AG04450 (cell line): ENCODE measurements at regions of chr3 and their contacts with region 1.

Region 1: DNA sequence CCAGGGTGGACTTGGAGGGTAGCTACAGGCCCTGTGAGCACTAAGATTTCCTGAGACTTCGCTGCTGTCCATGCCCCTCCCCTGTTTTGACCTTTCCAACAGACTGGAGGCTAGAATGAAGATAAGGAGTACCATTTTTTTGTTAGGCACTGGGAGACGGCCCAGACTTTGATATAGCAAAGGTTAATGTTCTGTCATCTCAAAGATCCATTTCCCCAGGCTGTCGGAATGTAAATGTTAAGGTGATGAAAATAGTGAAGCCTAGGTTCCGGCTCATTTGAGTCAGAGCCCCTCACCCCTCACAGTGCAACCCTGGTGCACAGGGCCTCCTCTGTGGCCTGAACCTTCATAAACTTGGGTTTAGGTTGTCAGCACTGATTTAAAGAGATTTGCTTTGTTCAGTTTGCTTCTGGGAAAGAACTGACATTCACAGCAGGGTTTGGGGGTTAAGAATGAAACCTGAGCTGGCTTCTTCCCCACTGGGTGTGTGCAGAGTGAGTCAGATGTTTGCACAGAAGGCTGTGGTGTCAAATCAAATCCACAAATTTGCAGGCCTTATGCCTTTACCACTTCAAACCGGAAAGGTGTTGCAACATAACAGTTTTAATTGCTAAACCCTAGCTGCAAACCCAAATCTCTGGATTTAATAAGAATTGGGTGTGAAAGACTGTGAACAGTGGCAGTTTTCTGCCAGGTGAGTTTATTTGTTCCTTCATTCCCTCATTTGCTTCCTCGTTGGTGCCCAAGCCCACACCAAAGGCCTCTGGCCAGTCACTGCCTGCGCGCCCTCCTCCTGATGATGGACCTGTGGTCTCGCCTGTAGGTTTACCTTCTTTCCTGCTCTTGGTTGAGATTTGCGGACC is 20.6 kb upstream of the KCTD6 start:
- DNase-seq: peak; percentile 33
- H3K4me3 ChIP-seq: no peak overlapping the region
- H3K27ac ChIP-seq: peak overlapping the region; percentile 75
- H3K27me3 ChIP-seq: no peaks in the 10 kb centered on the region
- CTCF ChIP-seq: no peak

Region 2: DNA sequence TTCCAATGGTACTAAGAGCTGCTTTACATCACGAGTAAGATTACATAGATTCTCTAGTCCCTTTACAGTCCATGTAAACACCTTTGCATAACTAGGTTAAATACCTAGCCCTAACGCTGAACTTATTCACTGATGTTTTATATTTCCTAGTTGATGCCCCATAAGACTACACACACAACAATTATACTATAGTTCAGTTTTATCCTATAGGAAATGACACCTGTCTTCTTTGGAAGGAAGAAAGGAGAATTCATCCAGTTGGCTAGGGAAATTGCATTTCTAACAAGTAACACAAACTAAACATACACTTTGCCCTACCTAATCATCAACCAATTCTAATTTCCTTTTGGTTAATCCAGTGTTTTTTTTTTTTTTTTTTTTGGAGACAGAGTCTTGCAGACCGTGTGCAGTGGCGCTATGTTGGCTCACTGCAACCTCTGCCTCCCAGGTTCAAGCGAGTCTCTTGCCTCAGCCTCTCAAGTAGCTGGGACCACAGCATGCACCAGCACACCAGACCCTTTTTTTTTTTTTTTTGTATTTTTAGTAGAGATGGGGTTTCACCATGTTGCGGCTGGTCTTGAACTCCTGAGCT is 901.3 kb before region 1 on chr3:
- CTCF ChIA-PET with region 1: interaction called, 10 read pairs
- POLR2A ChIA-PET with region 1: no interaction called
- DNase-seq: no peak
- H3K4me3 ChIP-seq: no peak overlapping the region
- H3K27ac ChIP-seq: no peak overlapping the region
- H3K27me3 ChIP-seq: no peaks in the 10 kb centered on the region
- CTCF ChIP-seq: no peak

Region 3: DNA sequence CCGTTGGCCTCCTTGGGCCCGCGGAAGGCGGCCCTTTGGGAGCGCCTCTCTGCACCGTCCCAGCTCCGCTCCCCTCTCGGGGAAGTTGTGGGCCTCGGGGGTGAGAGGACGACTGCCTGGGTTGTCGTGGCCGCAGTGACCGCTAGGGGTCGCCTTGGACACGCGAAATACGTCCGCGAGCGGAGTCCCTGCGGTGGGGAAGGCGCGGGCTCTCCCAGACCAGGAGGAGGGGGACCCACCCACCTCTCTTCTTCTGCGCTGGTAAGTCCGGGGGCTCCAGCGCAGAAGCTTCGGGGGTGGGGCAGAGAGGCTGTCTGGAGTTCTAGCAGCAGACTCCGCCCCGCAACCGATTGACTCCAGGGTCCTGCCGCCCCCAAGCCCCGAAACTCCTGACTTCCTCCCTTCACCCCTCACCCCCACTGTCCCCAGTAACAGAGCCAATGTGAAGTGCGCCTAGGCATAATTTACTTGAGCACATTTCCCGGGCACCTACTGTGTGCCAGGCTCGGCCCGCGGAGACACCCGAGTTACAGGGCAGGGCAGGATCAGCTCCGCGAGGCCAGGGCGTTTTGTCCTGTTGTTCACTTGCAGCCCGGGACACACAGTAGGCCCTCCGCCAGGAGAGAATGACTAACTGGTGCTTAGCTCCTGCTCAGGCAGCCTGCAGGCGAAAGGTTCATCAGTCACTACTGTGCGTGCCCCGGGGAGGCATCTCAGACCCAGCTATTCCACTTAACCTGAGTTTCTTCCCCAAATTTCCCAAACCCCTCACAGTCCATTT is 293.3 kb before region 1 on chr3:
- CTCF ChIA-PET with region 1: no interaction called
- POLR2A ChIA-PET with region 1: no interaction called
- DNase-seq: peak; percentile 48
- H3K4me3 ChIP-seq: peak overlapping the region; percentile 49
- H3K27ac ChIP-seq: no peak overlapping the region
- H3K27me3 ChIP-seq: no peaks in the 10 kb centered on the region
- CTCF ChIP-seq: peak; percentile 89

Region 4: GRCh38 chr3:58452176-58452575 is 19.1 kb before region 1 on chr3:
- CTCF ChIA-PET with region 1: no interaction called
- POLR2A ChIA-PET with region 1: no interaction called
- DNase-seq: no peak
- H3K4me3 ChIP-seq: no peak overlapping the region
- H3K27ac ChIP-seq: no peak overlapping the region
- H3K27me3 ChIP-seq: peaks cover 3% of the 10 kb centered on the region
- CTCF ChIP-seq: no peak

Region 5: DNA sequence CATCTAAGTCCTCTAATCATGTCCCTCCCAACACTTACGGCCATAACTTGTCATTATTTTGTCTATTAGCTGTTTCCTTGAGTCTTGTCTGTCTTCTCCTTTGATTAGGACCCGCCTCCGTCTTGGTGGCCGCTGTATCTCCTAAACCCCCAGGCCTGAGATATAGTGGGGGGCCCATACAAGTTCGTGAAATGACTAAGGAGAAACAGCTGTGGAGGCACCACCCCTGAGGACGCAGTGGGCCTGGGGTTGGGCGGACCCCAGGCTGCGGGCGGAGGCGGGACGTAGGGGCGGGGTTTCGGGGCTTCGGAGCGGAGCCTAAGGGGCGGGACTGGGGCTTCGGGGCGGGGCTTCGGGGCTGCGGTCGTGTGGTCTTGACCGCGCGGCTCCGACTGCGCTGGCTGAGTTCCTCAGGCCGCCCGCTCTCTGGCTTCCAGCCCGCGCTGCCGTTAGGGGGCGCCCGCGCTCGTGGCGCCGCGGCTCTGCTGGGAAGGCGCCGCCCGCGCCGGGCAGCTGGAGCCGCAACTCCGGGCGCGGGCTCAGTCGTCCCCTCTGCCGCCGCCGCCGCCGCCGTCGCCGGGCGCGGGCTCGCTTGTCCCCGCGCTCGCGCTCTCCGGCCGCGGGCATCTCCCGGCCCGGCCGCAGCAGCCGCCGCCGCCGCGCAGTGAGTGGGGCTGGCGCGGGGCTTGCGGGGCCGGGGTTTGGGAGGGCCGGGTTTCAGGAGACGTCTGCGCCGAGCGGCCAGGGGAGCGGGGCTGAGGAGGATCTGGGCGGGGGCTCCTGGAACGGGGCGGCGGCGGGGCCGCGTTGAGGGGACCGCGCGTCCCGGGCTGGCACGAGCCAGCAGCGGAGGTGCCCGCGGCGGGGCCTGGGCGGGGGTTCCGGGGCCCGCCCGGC is 20.5 kb after region 1 on chr3 and contains the start of gene KCTD6:
- CTCF ChIA-PET with region 1: interaction called, 12 read pairs
- POLR2A ChIA-PET with region 1: no interaction called
- DNase-seq: peak; percentile 80
- H3K4me3 ChIP-seq: peak within 1 kb of the TSS; percentile 84
- H3K27ac ChIP-seq: no peak within 1 kb of the TSS
- H3K27me3 ChIP-seq: no peaks in the 10 kb centered on the region
- CTCF ChIP-seq: peak; percentile 59
- polyA plus RNA-seq, gene KCTD6: 9.6 and 13.7 TPM in 2 replicates